Posterior cingulate gyrus (tissue), 11 donors: ENCODE measurements at regions of chr1 and their contacts with region 1.

Region 1: GRCh38 chr1:56584910-56585528 is 5.7 kb upstream of the PLPP3 start:
- DNase-seq: peak in 1 of 10 donors; percentile 21

Region 2: GRCh38 chr1:54944610-54945544 is 1640.1 kb before region 1 on chr1:
- intact Hi-C with region 1: loop called (anchors 10 kb)
- DNase-seq: peak; percentile 31 to 95 (median 74)

Region 3: GRCh38 chr1:55284852-55285251 is 1300.2 kb before region 1 on chr1:
- intact Hi-C with region 1: loop called (anchors 2 kb)
- DNase-seq: peak in 2 of 10 donors; percentile 11 to 32

Region 4: DNA sequence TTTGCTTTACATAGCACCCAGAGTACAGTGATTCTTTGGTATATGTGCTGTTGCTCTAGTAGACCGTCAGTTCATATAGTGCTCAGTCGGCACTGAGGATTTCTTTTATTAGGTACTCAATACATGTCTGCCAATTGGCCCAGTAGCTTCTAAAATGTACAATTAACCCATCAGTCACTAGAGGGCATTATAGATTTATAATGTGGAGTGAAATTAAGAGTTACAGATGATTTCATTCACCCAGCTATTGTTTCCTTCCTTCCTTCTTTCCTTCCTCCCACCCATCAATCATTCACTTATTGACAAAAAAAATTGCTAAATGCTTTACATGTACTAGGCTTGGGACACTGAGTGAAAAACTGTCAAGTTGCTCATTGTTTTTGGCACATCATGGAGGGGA is 1106.3 kb before region 1 on chr1:
- intact Hi-C with region 1: loop called (anchors 10 kb)
- DNase-seq: no peak

Region 5: GRCh38 chr1:56077206-56077605 is 507.8 kb before region 1 on chr1:
- intact Hi-C with region 1: loop called (anchors 5 kb)
- DNase-seq: no peak

Region 6: DNA sequence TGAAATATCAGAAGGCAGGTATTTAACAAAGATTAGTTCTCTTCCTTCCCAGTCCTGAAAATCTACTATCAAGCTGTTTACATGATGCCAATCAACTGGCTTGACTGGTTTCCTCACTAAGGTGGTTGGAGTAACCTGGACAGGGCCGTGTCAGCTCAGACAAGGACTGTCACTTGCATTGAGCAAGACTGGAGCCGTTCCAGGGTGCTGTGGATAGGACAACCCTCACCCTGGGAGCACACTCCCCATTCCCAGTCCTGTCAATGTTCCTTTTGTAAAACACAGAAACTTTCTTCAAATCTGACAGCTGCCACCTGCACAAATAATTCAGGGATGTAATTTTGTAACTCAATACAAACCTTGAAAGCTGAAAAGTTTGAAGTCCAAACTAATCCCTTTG is 37.1 kb before region 1 on chr1:
- intact Hi-C with region 1: no loop called
- DNase-seq: peak in 1 of 10 donors; percentile 33

Region 7: GRCh38 chr1:57007948-57008347 is 422.9 kb after region 1 on chr1:
- intact Hi-C with region 1: no loop called
- DNase-seq: no peak